OCI-LY7 (cell line): ENCODE measurements at regions of chr10 and their contacts with region 1.

Region 1: DNA sequence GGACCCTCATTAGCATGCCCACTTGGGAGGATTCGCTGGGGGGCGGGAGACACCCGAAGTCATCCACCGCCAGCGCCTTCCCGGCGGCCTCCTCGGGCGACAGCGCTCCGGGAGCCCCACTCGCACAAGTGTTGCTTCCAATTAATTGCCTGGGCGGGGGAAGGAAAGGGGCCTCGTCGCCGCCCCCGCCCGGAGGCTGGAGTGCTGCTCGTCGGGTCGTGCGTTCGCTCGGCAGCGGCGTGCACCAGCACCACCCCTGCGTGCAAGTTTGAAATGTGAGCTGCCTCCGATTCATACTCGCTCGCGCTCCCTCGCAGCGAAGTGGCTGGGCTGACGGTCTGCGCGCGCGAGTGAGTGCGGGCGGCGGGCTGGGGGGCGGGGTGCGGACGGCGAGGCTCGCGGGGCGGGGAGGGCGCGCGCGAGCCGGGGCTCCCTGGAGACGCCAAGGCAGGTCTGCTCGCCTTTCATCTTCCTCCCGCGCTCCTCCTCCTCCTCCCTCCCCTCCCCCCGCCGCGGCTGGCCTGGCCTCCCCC is 104.6 kb upstream of the PPIF start:
- DNase-seq: peak; percentile 78
- H3K4me3 ChIP-seq: peak overlapping the region; percentile 76
- H3K27ac ChIP-seq: peak overlapping the region; percentile 90
- H3K4me1 ChIP-seq: peaks cover 49% of the 10 kb centered on the region
- CTCF ChIP-seq: no peak

Region 2: GRCh38 chr10:79221110-79222051 is 21.3 kb before region 1 on chr10:
- CTCF ChIA-PET with region 1: no interaction called
- POLR2A ChIA-PET with region 1: no interaction called
- intact Hi-C with region 1: no loop called
- DNase-seq: no peak
- H3K4me3 ChIP-seq: no peak overlapping the region
- H3K27ac ChIP-seq: no peak overlapping the region
- H3K4me1 ChIP-seq: no peaks in the 10 kb centered on the region
- CTCF ChIP-seq: no peak

Region 3: GRCh38 chr10:79260786-79261740 is 18.4 kb after region 1 on chr10:
- CTCF ChIA-PET with region 1: interaction called, 3 read pairs
- POLR2A ChIA-PET with region 1: interaction called, 60 read pairs
- intact Hi-C with region 1: no loop called
- DNase-seq: no peak
- H3K4me3 ChIP-seq: no peak overlapping the region
- H3K27ac ChIP-seq: peak overlapping the region; percentile 44
- H3K4me1 ChIP-seq: peaks cover 45% of the 10 kb centered on the region
- CTCF ChIP-seq: no peak

Region 4: GRCh38 chr10:79400146-79401004 is 157.7 kb after region 1 on chr10:
- CTCF ChIA-PET with region 1: no interaction called
- POLR2A ChIA-PET with region 1: no interaction called
- intact Hi-C with region 1: no loop called
- DNase-seq: peak; percentile 51
- H3K4me3 ChIP-seq: no peak overlapping the region
- H3K27ac ChIP-seq: no peak overlapping the region
- H3K4me1 ChIP-seq: no peaks in the 10 kb centered on the region
- CTCF ChIP-seq: peak; percentile 89